Endothelial cell of umbilical vein (primary cell): ENCODE measurements at regions of chr17 and their contacts with region 1.

Region 1: GRCh38 chr17:40531051-40531991 is 29.9 kb upstream of the TNS4 start:
- DNase-seq: no peak
- H3K4me3 ChIP-seq: no peak overlapping the region
- H3K27ac ChIP-seq: no peak overlapping the region
- H3K4me1 ChIP-seq: peaks cover 28% of the 10 kb centered on the region
- H3K27me3 ChIP-seq: peaks cover 12 to 22% of the 10 kb centered on the region in 2 experiments
- CTCF ChIP-seq: no peak
- POLR2A ChIP-seq: no peak

Region 2: GRCh38 chr17:40355123-40355803 is 176.1 kb before region 1 on chr17:
- CTCF ChIA-PET with region 1: interaction called, 161 read pairs
- POLR2A ChIA-PET with region 1: no interaction called
- dilution Hi-C with region 1: no loop called
- intact Hi-C with region 1: loop called (anchors 1 kb)
- DNase-seq: peak; percentile 72
- H3K4me3 ChIP-seq: no peak overlapping the region
- H3K27ac ChIP-seq: no peak overlapping the region
- H3K4me1 ChIP-seq: peaks cover 4% of the 10 kb centered on the region
- H3K27me3 ChIP-seq: no peaks in the 10 kb centered on the region
- CTCF ChIP-seq: peak; percentile 95 to 97
- POLR2A ChIP-seq: no peak

Region 3: DNA sequence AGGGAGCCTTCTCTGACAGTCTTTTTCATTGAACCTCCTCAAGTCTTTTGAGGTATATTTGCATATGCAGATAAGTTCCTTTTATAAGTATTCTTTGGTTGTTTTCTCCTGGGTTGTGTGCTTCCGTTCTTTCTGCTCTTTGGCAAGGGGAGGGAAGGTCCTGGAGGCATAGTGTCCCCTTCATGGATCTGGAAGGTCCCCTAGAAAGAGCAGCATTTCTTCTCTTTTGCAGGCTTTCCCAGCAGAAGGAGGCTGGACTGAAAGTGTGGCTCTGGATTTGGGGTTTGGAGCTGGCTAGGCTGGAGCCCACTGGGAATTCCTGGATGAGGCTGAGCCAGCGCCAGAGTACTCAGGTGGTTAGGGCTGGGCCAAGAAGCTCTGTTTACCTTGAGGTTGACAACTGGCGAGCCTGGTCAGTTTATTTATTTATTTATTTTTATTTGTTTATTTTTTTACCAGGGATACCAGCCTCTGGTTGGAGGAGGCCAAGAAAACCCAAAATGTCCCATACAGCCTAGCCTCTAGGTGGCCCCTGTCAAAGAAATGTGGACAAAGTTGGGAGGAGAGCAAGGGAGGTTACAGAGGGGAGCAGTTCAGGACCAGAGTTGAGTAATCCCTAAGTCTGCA is 108.2 kb before region 1 on chr17:
- CTCF ChIA-PET with region 1: interaction called, 91 read pairs
- POLR2A ChIA-PET with region 1: interaction called, 4 read pairs
- dilution Hi-C with region 1: no loop called
- intact Hi-C with region 1: no loop called
- DNase-seq: no peak
- H3K4me3 ChIP-seq: no peak overlapping the region
- H3K27ac ChIP-seq: no peak overlapping the region
- H3K4me1 ChIP-seq: peaks cover 10% of the 10 kb centered on the region
- H3K27me3 ChIP-seq: no peaks in the 10 kb centered on the region
- CTCF ChIP-seq: no peak
- POLR2A ChIP-seq: no peak

Region 4: DNA sequence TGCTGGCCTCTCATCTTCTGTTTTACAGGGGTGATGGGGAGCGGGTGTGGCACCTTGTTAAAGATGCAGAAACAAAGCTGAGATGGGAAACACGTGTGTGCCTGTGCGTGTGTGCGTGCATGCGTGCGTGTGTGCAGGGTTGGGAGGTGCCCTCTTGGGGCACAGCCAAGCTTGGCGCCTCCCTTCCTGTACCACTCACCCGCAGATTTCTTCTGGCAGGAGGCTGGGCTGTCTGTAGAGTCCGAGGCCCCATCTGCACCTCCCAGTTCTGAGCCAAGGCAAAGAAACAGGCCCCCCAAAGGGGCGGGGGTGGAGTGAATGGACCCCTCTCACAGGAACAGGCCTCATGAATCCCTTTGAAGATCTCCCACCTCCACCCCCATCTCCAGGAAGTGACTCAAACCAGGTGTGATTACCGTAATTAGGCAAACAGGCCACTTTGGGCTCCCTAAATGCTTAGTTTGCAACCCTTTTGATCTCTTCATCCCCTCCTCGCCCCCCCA is 50.8 kb before region 1 on chr17:
- CTCF ChIA-PET with region 1: interaction called, 148 read pairs
- POLR2A ChIA-PET with region 1: interaction called, 3 read pairs
- dilution Hi-C with region 1: no loop called
- intact Hi-C with region 1: loop called (anchors 1 kb)
- DNase-seq: no peak
- H3K4me3 ChIP-seq: no peak overlapping the region
- H3K27ac ChIP-seq: no peak overlapping the region
- H3K4me1 ChIP-seq: no peaks in the 10 kb centered on the region
- H3K27me3 ChIP-seq: peaks cover 0 to 2% of the 10 kb centered on the region in 2 experiments
- CTCF ChIP-seq: no peak
- POLR2A ChIP-seq: no peak

Region 5: GRCh38 chr17:40516581-40517285 is 14.6 kb before region 1 on chr17:
- CTCF ChIA-PET with region 1: interaction called, 21 read pairs
- POLR2A ChIA-PET with region 1: no interaction called
- dilution Hi-C with region 1: no loop called
- intact Hi-C with region 1: no loop called
- DNase-seq: no peak
- H3K4me3 ChIP-seq: no peak overlapping the region
- H3K27ac ChIP-seq: no peak overlapping the region
- H3K4me1 ChIP-seq: peaks cover 7% of the 10 kb centered on the region
- H3K27me3 ChIP-seq: peaks cover 0 to 18% of the 10 kb centered on the region in 2 experiments
- CTCF ChIP-seq: no peak
- POLR2A ChIP-seq: no peak

Region 6: DNA sequence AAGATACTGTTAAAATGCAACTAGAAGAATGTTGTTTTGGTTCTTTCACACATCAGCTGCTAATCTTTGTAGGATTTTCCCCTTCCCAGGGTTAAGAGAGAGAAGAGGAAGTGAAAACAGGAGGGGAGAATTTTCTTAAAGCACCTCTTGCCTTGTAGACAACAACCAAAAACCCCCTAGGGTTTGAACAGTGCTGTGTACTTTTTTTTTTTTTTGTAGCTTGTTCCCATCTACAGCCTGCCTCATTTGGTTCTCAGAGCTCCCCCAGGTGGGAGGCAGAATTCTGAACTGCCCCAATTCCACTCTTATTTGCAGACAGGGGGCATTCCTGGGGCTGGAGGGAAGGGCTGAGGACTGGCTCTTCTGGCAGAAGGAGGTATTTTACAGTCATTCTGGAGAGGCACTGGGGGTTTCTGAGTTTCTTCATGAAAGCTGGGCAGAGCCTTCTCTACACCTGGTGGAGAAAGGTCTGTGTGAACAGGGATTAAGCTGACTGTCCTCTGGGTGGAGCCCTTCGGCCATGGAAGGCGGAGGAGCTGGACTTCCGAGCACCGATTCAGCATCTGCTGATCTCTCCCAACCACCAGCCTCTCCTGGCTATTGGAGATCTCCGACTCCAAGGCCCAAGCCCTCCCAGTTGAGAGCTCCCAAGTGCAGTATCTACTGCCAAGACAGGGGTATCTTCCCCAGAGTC is 84.1 kb after region 1 on chr17:
- CTCF ChIA-PET with region 1: interaction called, 11 read pairs
- POLR2A ChIA-PET with region 1: no interaction called
- dilution Hi-C with region 1: no loop called
- intact Hi-C with region 1: no loop called
- DNase-seq: peak; percentile 26
- H3K4me3 ChIP-seq: no peak overlapping the region
- H3K27ac ChIP-seq: no peak overlapping the region
- H3K4me1 ChIP-seq: no peaks in the 10 kb centered on the region
- H3K27me3 ChIP-seq: peaks cover 13 to 14% of the 10 kb centered on the region in 2 experiments
- CTCF ChIP-seq: peak; percentile 23 to 39
- POLR2A ChIP-seq: no peak

Region 7: GRCh38 chr17:40980596-40980995 is 449.3 kb after region 1 on chr17:
- CTCF ChIA-PET with region 1: no interaction called
- POLR2A ChIA-PET with region 1: no interaction called
- dilution Hi-C with region 1: no loop called
- intact Hi-C with region 1: no loop called
- DNase-seq: no peak
- H3K4me3 ChIP-seq: no peak overlapping the region
- H3K27ac ChIP-seq: no peak overlapping the region
- H3K4me1 ChIP-seq: no peaks in the 10 kb centered on the region
- H3K27me3 ChIP-seq: peaks cover 0 to 8% of the 10 kb centered on the region in 2 experiments
- CTCF ChIP-seq: no peak
- POLR2A ChIP-seq: no peak